ENCODE measurements at regions of chr9 and their contacts with region 1.

Region 1: DNA sequence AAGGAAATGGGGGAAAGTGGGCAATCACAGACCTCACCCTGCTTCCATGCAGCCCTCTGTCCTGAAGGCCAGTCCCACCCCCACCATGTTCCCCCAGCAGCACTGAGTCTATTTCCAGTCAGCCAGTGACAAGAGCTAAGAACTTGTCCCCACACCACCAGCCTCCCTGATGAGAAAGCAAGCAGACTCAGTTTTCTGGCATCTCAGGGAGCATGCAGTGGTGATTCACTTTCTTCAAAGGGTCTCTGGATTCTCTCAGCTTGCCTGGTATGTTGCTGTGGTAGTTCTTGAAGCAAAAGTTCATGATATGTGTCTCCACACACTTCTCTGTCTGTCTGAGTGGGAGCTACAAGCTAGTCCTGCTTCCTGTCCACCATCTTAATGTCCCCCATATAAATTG is 799.9 kb upstream of the TYRP1 start:
- DNase-seq: no peak
- H3K4me3 ChIP-seq: no peak overlapping the region
- H3K27ac ChIP-seq: no peak overlapping the region
- H3K4me1 ChIP-seq: no peaks in the 10 kb centered on the region
- H3K27me3 ChIP-seq: no peaks in the 10 kb centered on the region
- CTCF ChIP-seq: no peak
- POLR2A ChIP-seq: no peak

Region 2: GRCh38 chr9:11257992-11258391 is 635.3 kb before region 1 on chr9:
- CTCF ChIA-PET with region 1: no interaction called
- POLR2A ChIA-PET with region 1: no interaction called
- dilution Hi-C with region 1: no loop called
- intact Hi-C with region 1: loop called (anchors 10 kb)
- DNase-seq: no peak
- H3K4me3 ChIP-seq: no peak overlapping the region
- H3K27ac ChIP-seq: no peak overlapping the region
- H3K4me1 ChIP-seq: no peaks in the 10 kb centered on the region
- H3K27me3 ChIP-seq: no peaks in the 10 kb centered on the region
- CTCF ChIP-seq: no peak
- POLR2A ChIP-seq: no peak

Region 3: DNA sequence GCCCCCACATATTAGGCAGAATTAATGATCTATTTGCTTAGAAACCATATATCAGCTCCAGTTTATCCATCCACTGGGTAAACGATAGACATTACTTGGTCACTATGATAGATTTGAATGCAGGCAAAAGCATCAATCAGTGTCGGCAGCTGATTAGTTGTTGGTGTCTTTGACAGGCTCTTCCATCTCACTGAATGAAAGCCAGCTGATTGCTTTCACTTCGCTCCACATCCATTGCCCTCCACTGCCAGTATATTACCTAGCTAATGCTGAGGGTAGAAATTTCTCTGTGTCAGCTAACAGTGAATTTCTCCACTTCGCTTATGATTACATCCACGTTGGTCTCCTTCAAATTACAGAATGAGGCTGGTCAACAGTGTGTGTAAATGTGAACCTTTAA is 21.5 kb before region 1 on chr9:
- CTCF ChIA-PET with region 1: no interaction called
- POLR2A ChIA-PET with region 1: no interaction called
- dilution Hi-C with region 1: no loop called
- intact Hi-C with region 1: no loop called
- DNase-seq: no peak
- H3K4me3 ChIP-seq: no peak overlapping the region
- H3K27ac ChIP-seq: no peak overlapping the region
- H3K4me1 ChIP-seq: no peaks in the 10 kb centered on the region
- H3K27me3 ChIP-seq: no peaks in the 10 kb centered on the region
- CTCF ChIP-seq: no peak
- POLR2A ChIP-seq: no peak

Region 4: DNA sequence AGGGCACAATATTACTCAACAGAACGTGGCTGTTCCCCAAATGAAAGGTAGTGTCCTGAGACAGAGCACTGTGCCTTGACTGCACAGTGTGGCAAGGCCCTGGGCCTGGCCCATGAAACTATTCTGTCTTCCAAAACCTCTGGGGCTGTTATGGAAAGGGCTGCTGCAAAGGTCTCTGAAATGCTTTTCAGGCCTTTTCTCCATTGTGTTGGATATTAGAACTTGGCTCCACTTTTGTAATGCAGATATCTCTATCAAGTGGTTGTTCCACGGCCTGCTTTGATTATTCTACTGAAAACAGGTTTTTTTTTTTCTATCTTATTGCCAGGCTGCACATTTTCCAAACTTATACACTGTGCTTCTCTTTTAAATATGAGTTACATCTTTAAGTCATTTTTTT is 22.4 kb after region 1 on chr9:
- CTCF ChIA-PET with region 1: no interaction called
- POLR2A ChIA-PET with region 1: no interaction called
- dilution Hi-C with region 1: no loop called
- intact Hi-C with region 1: no loop called
- DNase-seq: no peak
- H3K4me3 ChIP-seq: no peak overlapping the region
- H3K27ac ChIP-seq: no peak overlapping the region
- H3K4me1 ChIP-seq: no peaks in the 10 kb centered on the region
- H3K27me3 ChIP-seq: no peaks in the 10 kb centered on the region
- CTCF ChIP-seq: no peak
- POLR2A ChIP-seq: no peak

Measured in endothelial cell of umbilical vein (primary cell).